Activated CD4-positive, alpha-beta T cell treated with anti-CD3 and anti-CD28 coated beads for 36 hours (primary cell): ENCODE measurements at regions of chr20 and their contacts with region 1.

Region 1: DNA sequence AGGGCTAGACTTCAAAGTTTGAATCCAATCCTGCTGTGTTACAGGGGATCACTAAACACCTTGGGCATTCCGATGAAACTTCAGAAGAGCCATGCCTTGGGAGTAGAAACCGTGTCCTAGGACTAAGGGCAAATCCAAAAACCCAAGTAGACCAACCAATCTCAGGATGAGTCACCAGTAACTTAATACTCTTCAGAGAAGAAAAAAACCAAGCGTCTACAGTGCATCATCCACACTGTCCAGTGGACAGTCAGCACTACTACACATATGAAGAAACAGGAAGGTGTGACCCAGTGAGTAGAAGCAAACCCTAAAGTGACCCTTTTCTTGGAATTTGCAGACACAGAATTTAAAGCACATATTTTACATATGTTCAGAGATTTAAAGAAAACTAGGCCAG is 39.4 kb upstream of the VAPB start:
- DNase-seq: no peak
- ATAC-seq: no peak
- H3K4me3 Mint-ChIP-seq: no peak overlapping the region
- H3K27ac Mint-ChIP-seq: peak overlapping the region; percentile 0
- H3K4me1 Mint-ChIP-seq: peaks cover 9% of the 10 kb centered on the region
- H3K27me3 Mint-ChIP-seq: no peaks in the 10 kb centered on the region

Region 2: DNA sequence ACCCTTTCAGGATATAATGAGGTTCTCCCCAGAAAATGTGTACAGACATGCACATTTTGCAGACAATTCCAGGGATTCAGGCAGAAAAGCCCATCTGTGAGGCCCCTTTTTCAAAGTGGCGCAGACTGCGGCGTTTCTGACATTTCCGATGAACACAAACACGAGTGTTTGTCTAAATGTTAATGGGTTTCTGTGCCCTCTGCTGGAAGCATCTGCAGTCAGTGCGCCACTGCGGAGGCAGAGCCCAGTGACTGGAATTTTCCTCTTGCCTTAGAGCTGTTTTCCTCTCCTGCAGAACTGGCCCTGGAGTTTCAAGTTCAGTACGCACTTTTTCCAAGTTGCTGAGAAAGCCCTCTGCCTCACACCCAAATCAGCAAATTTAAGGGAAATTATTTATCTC is 136.5 kb before region 1 on chr20:
- CTCF ChIA-PET with region 1: no interaction called
- POLR2A ChIA-PET with region 1: no interaction called
- intact Hi-C with region 1: no loop called
- DNase-seq: no peak
- ATAC-seq: no peak
- H3K4me3 Mint-ChIP-seq: no peak overlapping the region
- H3K27ac Mint-ChIP-seq: no peak overlapping the region
- H3K4me1 Mint-ChIP-seq: no peaks in the 10 kb centered on the region
- H3K27me3 Mint-ChIP-seq: peaks cover 25% of the 10 kb centered on the region

Region 3: DNA sequence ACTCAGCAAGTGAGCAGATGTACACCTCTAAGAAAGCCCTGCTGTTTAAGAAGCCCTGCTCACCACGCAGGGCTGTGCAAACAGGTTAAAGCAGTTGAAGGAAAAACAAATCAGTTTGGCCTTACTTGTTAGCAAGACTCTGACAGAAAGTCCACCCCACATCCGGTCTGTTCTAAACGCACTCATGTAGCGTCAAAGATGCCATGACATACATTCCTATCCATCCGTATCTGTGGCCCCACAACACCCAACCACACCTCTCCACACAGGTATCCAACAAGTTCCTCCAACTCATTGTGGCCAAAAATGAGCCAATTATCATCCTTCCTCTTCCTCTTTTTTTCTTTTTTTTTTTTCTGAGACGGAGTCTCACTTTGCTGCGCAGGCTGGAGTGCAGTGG is 62.9 kb before region 1 on chr20:
- CTCF ChIA-PET with region 1: no interaction called
- POLR2A ChIA-PET with region 1: no interaction called
- intact Hi-C with region 1: no loop called
- DNase-seq: no peak
- ATAC-seq: peak; percentile 49
- H3K4me3 Mint-ChIP-seq: no peak overlapping the region
- H3K27ac Mint-ChIP-seq: no peak overlapping the region
- H3K4me1 Mint-ChIP-seq: peaks cover 20% of the 10 kb centered on the region
- H3K27me3 Mint-ChIP-seq: no peaks in the 10 kb centered on the region

Region 4: GRCh38 chr20:58300321-58300720 is 49.3 kb before region 1 on chr20:
- CTCF ChIA-PET with region 1: no interaction called
- POLR2A ChIA-PET with region 1: no interaction called
- intact Hi-C with region 1: no loop called
- DNase-seq: no peak
- ATAC-seq: no peak
- H3K4me3 Mint-ChIP-seq: no peak overlapping the region
- H3K27ac Mint-ChIP-seq: no peak overlapping the region
- H3K4me1 Mint-ChIP-seq: peaks cover 18% of the 10 kb centered on the region
- H3K27me3 Mint-ChIP-seq: no peaks in the 10 kb centered on the region

Region 5: GRCh38 chr20:58402827-58403226 is 53.2 kb after region 1 on chr20:
- CTCF ChIA-PET with region 1: no interaction called
- POLR2A ChIA-PET with region 1: no interaction called
- intact Hi-C with region 1: loop called in 1 of 2 experiments (anchors 5 kb)
- DNase-seq: no peak
- ATAC-seq: peak; percentile 21
- H3K4me3 Mint-ChIP-seq: no peak overlapping the region
- H3K27ac Mint-ChIP-seq: no peak overlapping the region
- H3K4me1 Mint-ChIP-seq: peaks cover 30% of the 10 kb centered on the region
- H3K27me3 Mint-ChIP-seq: no peaks in the 10 kb centered on the region